Breast epithelium (tissue), 4 donors: ENCODE measurements at regions of chr2 and their contacts with region 1.

Region 1: GRCh38 chr2:188512456-188512855 is 220.8 kb downstream of the GULP1 start:
- DNase-seq: no peak
- H3K4me3 ChIP-seq: no peak overlapping the region
- H3K27ac ChIP-seq: no peak overlapping the region
- H3K4me1 ChIP-seq: no peaks in the 10 kb centered on the region
- H3K27me3 ChIP-seq: no peaks in the 10 kb centered on the region
- CTCF ChIP-seq: peak; percentile 28 to 45 (median 28)
- POLR2A ChIP-seq: no peak

Region 2: GRCh38 chr2:187581125-187581896 is 931.1 kb before region 1 on chr2:
- intact Hi-C with region 1: loop called (anchors 10 kb)
- DNase-seq: no peak
- H3K4me3 ChIP-seq: peak overlapping the region; percentile 6 to 43 (median 17)
- H3K27ac ChIP-seq: no peak overlapping the region
- H3K4me1 ChIP-seq: no peaks in the 10 kb centered on the region
- H3K27me3 ChIP-seq: no peaks in the 10 kb centered on the region
- CTCF ChIP-seq: peak; percentile 70 to 80 (median 71)
- POLR2A ChIP-seq: no peak

Region 3: GRCh38 chr2:187774551-187775071 is 737.8 kb before region 1 on chr2:
- intact Hi-C with region 1: loop called (anchors 5 kb)
- DNase-seq: no peak
- H3K4me3 ChIP-seq: no peak overlapping the region
- H3K27ac ChIP-seq: no peak overlapping the region
- H3K4me1 ChIP-seq: no peaks in the 10 kb centered on the region
- H3K27me3 ChIP-seq: no peaks in the 10 kb centered on the region
- CTCF ChIP-seq: no peak
- POLR2A ChIP-seq: no peak

Region 4: GRCh38 chr2:188561473-188561979 is 49.1 kb after region 1 on chr2:
- intact Hi-C with region 1: no loop called
- DNase-seq: no peak
- H3K4me3 ChIP-seq: no peak overlapping the region
- H3K27ac ChIP-seq: no peak overlapping the region
- H3K4me1 ChIP-seq: no peaks in the 10 kb centered on the region
- H3K27me3 ChIP-seq: no peaks in the 10 kb centered on the region
- CTCF ChIP-seq: no peak
- POLR2A ChIP-seq: no peak